ENCODE measurements at regions of chr11 and their contacts with region 1.

Region 1: GRCh38 chr11:35391922-35392813 is 27.2 kb downstream of the SLC1A2 start:
- DNase-seq: peak; percentile 92
- H3K4me3 Mint-ChIP-seq: no peak overlapping the region
- H3K27ac Mint-ChIP-seq: no peak overlapping the region
- H3K4me1 Mint-ChIP-seq: peaks cover 43% of the 10 kb centered on the region
- H3K27me3 Mint-ChIP-seq: no peaks in the 10 kb centered on the region
- CTCF ChIP-seq: peak; percentile 87

Region 2: DNA sequence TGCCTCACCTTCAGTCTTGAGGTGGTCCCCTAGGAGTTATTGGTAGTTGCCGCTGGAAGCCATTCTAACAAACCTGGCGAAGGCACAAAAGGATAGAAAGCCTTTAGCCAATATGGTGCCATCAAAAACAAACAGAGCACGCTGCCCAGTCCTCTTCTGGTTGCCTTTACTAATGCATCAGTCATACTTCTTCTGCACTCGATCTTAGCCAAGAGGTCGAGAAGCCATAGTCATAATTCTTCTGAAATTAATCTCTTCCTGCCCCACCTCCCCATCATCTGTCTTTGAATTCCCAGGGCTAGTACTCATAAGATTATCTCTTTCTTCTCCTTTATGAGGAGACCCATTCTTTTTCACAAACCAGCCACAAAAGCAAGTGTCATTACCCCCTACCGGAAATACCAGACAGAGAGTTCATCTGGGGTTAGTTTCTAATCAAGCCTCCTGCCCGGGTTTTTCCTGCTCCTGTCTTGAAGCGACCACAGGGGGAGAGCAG is 792.7 kb before region 1 on chr11:
- CTCF ChIA-PET with region 1: no interaction called
- intact Hi-C with region 1: loop called (anchors 10 kb)
- DNase-seq: peak; percentile 52
- H3K4me3 Mint-ChIP-seq: peak overlapping the region; percentile 51
- H3K27ac Mint-ChIP-seq: peak overlapping the region; percentile 81
- H3K4me1 Mint-ChIP-seq: peaks cover 77% of the 10 kb centered on the region
- H3K27me3 Mint-ChIP-seq: no peaks in the 10 kb centered on the region
- CTCF ChIP-seq: no peak

Region 3: DNA sequence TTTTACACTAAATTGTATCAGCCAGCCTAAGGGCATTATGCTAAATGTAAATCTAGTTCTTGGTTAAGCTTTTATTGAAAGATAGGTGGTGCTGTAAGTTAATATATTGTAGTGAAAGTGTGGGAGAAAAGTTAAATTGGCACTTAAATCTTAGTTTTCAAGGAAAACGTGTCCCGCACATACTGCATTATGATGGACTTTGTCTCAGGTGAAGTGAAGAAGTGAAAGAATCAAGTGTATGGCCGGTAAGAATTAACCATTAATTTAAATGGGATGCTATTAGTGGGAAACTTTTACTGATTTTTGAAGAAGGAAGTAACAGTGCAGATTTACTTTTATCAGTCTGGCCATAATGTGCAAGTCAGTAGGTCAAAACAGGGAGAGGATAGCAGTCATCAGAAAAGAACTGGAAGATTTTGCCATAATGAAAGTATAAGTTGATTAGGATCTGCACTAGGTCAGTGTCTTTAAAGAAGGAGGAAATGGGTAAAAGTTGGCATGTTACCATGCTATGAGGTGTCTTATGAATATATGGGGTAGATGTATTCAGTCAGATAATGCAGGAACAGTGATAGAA is 394.1 kb before region 1 on chr11:
- CTCF ChIA-PET with region 1: interaction called, 5 read pairs
- intact Hi-C with region 1: loop called (anchors 1 kb)
- DNase-seq: no peak
- H3K4me3 Mint-ChIP-seq: peak overlapping the region; percentile 57
- H3K27ac Mint-ChIP-seq: peak overlapping the region; percentile 82
- H3K4me1 Mint-ChIP-seq: peaks cover 23% of the 10 kb centered on the region
- H3K27me3 Mint-ChIP-seq: no peaks in the 10 kb centered on the region
- CTCF ChIP-seq: no peak

Region 4: DNA sequence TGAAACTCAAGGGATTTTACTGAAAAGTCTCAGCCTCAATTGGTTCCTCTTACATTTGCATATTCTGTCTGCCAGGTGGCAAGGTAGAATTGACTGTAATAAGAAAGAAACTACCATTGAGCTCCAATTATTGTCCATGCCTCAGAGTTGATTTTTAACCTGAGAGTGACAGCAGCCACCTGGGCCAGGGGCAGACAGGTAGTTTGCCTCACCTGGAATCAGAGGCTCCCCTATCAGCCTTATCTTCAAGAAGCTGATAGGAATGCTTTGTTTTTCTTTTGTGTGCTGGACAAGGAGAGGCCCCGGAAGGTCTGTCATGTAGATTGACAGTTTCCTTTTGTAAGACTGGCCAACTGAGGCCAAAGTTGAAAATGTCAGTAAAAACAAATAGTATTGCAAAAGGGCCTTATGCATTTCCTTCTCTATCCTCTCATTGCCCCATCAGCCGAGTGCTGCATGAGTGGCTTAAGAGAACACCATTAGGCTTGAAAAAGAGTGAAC is 219.1 kb before region 1 on chr11:
- CTCF ChIA-PET with region 1: no interaction called
- intact Hi-C with region 1: loop called (anchors 5 kb)
- DNase-seq: peak; percentile 68
- H3K4me3 Mint-ChIP-seq: peak overlapping the region; percentile 34
- H3K27ac Mint-ChIP-seq: peak overlapping the region; percentile 92
- H3K4me1 Mint-ChIP-seq: peaks cover 74% of the 10 kb centered on the region
- H3K27me3 Mint-ChIP-seq: no peaks in the 10 kb centered on the region
- CTCF ChIP-seq: no peak

Region 5: DNA sequence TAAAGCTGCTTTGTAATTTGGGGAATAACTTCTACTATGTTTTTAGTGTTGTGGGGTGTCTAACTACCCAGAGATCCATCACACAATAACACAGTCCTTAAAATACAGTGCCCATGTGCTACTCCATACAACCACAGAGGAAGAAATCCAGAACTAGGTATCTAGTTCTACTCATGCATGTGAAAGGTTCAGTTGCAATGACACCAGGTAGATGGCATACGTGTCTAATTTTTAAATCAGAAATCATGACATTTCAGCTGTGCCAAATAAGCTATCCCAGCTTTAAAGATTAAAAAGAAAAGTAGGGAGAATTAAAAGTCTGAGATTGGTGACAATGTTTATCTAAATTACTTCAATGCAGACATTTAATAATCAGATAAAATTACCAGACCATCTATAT is 131.0 kb before region 1 on chr11:
- CTCF ChIA-PET with region 1: interaction called, 7 read pairs
- intact Hi-C with region 1: loop called (anchors 1 kb)
- DNase-seq: no peak
- H3K4me3 Mint-ChIP-seq: no peak overlapping the region
- H3K27ac Mint-ChIP-seq: no peak overlapping the region
- H3K4me1 Mint-ChIP-seq: peaks cover 8% of the 10 kb centered on the region
- H3K27me3 Mint-ChIP-seq: no peaks in the 10 kb centered on the region
- CTCF ChIP-seq: no peak

Region 6: DNA sequence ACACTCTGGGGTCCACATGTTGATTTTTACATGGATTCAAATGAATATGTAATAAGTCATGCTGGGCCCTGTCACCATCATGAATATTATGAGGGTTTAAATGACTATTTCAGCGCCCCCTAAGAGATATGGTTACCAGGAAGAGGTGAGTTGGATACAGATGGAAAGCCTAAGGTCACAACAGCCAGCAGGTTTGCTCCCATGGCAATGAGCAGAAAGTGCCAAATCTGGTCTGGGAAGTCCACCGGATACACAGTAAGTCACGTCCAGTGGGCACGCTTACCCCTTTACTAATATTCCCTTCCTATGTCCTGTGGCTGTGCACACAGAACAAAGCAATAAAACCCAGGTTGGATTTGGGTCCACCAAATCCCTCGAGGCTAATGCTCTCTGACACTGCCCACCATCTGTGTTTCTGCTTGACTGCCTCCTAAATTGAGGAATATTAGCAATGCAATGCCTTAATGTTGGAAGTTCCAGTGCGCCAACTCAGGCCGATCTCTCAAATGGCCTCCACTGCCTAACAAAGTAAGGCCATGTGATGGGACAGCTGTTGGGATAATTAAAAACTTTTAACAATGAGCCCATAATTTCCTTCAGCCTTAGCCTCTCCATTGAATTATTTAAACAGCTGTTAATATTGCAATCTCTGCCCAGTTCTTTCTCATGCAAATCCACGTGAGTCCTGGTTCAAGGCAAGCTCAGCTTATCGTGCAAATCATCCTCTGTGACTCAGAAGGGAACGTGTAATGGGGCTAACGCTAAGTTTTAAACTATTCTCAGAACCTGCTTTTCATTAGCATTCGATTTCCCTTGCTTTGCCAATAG is 70.4 kb before region 1 on chr11:
- CTCF ChIA-PET with region 1: no interaction called
- intact Hi-C with region 1: no loop called
- DNase-seq: no peak
- H3K4me3 Mint-ChIP-seq: no peak overlapping the region
- H3K27ac Mint-ChIP-seq: peak overlapping the region; percentile 83
- H3K4me1 Mint-ChIP-seq: peaks cover 24% of the 10 kb centered on the region
- H3K27me3 Mint-ChIP-seq: no peaks in the 10 kb centered on the region
- CTCF ChIP-seq: no peak

Region 7: GRCh38 chr11:35343033-35343598 is 49.1 kb before region 1 on chr11:
- CTCF ChIA-PET with region 1: no interaction called
- intact Hi-C with region 1: no loop called
- DNase-seq: no peak
- H3K4me3 Mint-ChIP-seq: no peak overlapping the region
- H3K27ac Mint-ChIP-seq: no peak overlapping the region
- H3K4me1 Mint-ChIP-seq: no peaks in the 10 kb centered on the region
- H3K27me3 Mint-ChIP-seq: no peaks in the 10 kb centered on the region
- CTCF ChIP-seq: no peak

Region 8: GRCh38 chr11:35427071-35427470 is 34.9 kb after region 1 on chr11:
- CTCF ChIA-PET with region 1: no interaction called
- intact Hi-C with region 1: no loop called
- DNase-seq: no peak
- H3K4me3 Mint-ChIP-seq: no peak overlapping the region
- H3K27ac Mint-ChIP-seq: no peak overlapping the region
- H3K4me1 Mint-ChIP-seq: no peaks in the 10 kb centered on the region
- H3K27me3 Mint-ChIP-seq: peaks cover 100% of the 10 kb centered on the region
- CTCF ChIP-seq: no peak

Measured in Calu3 (cell line).